ENCODE measurements at regions of chr3 and their contacts with region 1.

Region 1: GRCh38 chr3:10389995-10390394 is 69.1 kb upstream of the SEC13 start:
- H3K4me3 Mint-ChIP-seq: no peak overlapping the region
- H3K27ac Mint-ChIP-seq: peak overlapping the region; percentile 77
- H3K4me1 Mint-ChIP-seq: peaks cover 26% of the 10 kb centered on the region
- H3K27me3 Mint-ChIP-seq: peaks cover 4% of the 10 kb centered on the region

Region 2: GRCh38 chr3:10370429-10370828 is 19.6 kb before region 1 on chr3:
- intact Hi-C with region 1: loop called (anchors 2 kb)
- H3K4me3 Mint-ChIP-seq: no peak overlapping the region
- H3K27ac Mint-ChIP-seq: peak overlapping the region; percentile 38
- H3K4me1 Mint-ChIP-seq: peaks cover 42% of the 10 kb centered on the region
- H3K27me3 Mint-ChIP-seq: peaks cover 8% of the 10 kb centered on the region